ENCODE measurements at regions of chr6 and their contacts with region 1.

Region 1: GRCh38 chr6:30102970-30103874 is 9.7 kb downstream of the TRIM31 start:
- DNase-seq: peak; percentile 60 to 89 (median 81)
- ATAC-seq: peak; percentile 82 to 87
- H3K4me3 Mint-ChIP-seq: peak overlapping the region; percentile 81 to 94 (median 90)
- H3K27ac Mint-ChIP-seq: peak overlapping the region; percentile 29 to 91 (median 78)
- H3K4me1 Mint-ChIP-seq: peaks cover 23 to 44% (median 41%) of the 10 kb centered on the region in 4 donors
- H3K27me3 Mint-ChIP-seq: peaks cover 20 to 59% (median 43%) of the 10 kb centered on the region in 5 donors

Region 2: GRCh38 chr6:30047220-30047619 is 56.0 kb before region 1 on chr6:
- POLR2A ChIA-PET with region 1: no interaction called
- DNase-seq: no peak
- ATAC-seq: peak in 1 of 2 donors; percentile 29
- H3K4me3 Mint-ChIP-seq: no peak overlapping the region
- H3K27ac Mint-ChIP-seq: peak overlapping the region in 2 of 10 donors; percentile 7 to 61
- H3K4me1 Mint-ChIP-seq: peaks cover 5 to 9% (median 7%) of the 10 kb centered on the region in 4 donors
- H3K27me3 Mint-ChIP-seq: no peaks in the 10 kb centered on the region

Region 3: DNA sequence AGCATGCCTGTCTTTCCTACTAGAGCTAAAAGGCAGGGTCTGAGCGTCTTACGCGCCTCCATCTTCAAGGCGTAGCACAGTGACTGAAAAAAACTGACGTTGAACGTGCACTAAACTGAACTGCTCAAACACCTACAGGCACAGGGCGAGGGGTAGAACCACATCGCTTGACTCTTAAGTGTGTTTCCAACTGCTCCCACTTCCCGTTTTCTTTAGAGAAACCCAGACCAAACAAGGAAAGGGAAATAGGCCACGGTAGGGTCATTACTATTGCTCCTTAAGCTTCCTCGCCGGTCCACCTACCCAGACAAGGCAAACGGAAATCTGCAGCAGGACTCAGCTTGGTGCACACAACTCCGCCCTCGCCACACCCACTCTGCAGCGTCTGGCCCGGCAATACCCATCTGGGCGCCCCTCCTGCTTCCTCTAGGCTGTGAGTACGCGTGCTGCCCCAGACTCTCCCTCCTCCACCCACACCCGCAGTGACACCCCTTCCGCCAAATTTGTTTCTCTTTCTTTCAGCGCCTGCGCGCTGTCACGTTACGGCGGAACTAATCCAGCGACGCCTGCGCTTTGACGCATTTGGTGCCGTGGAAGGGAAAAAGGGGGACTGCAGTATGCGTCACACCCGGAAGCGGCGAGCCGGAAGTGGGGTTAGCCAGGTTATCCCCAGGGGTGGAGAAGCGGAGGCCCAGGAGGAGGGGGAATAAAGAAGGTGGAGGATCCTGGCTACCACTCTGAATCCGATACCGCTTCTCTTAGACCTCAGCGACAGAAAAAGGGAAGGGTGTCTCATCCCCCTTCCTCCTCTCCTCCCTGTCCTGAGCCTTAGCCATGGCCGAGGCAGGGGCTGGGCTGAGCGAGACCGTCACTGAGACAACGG is 36.4 kb before region 1 on chr6 and contains the start of gene PPP1R11:
- POLR2A ChIA-PET with region 1: interaction called, 16 read pairs
- DNase-seq: peak; percentile 94 to 99 (median 98)
- ATAC-seq: peak; percentile 95 to 96
- H3K4me3 Mint-ChIP-seq: peak within 1 kb of the TSS; percentile 86 to 99 (median 98)
- H3K27ac Mint-ChIP-seq: peak within 1 kb of the TSS; percentile 97 to 100 (median 99)
- H3K4me1 Mint-ChIP-seq: peaks cover 36 to 75% (median 59%) of the 10 kb centered on the region in 4 donors
- H3K27me3 Mint-ChIP-seq: peaks cover 6 to 22% (median 14%) of the 10 kb centered on the region in 5 donors
- polyA plus RNA-seq, gene PPP1R11: 97.6 to 108 (median 101) TPM

Region 4: DNA sequence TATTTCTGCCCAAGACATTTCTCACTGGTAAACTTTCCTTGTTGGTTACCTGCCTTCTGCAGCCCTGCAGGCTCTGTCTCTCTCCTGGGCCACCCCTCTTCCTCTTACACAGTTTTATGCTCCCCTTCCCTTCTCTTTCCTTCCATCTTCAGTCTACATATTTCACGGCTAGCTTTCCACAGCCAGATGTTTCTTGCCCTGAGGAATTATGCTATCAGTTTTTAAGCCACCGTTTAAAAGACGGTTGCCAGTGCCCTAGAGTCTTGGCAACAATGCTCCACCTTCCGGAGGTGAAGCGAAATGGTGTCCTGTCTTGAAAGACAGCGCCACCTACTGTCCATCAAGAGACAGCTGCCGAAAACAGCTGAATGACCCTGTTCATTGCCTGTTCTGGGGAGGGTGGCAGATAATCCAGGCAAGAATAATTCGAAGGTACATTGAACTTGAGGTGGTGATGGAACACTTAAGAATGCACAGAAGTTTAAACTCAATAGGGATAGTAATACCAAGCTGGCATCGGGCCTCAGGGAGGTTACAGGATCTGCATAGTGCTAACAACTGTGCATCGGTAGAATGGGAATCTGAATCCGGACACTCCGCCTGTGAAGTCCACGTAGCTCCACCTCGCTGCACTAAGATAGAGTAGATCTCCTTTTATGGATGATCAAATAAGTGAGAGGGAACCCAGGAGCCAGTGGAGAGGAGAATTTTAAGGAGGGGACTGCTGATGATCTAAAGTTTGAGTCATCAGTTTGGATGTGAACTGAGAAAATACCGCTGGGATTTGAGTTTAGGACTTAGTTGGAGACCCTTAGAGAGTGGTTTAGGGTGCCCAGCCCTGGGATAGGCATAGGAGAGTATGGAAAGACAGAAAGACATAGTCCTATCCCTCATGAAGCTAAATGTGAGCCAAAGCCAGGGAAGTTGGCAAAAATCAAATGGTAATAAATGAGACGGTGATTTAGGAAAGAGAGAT is 28.0 kb after region 1 on chr6:
- POLR2A ChIA-PET with region 1: interaction called, 18 read pairs
- DNase-seq: peak in 9 of 10 donors; percentile 56 to 86 (median 71)
- ATAC-seq: peak; percentile 95 to 98
- H3K4me3 Mint-ChIP-seq: peak overlapping the region in 5 of 10 donors; percentile 7 to 40 (median 20)
- H3K27ac Mint-ChIP-seq: no peak overlapping the region
- H3K4me1 Mint-ChIP-seq: peaks cover 6 to 14% (median 8%) of the 10 kb centered on the region in 4 donors
- H3K27me3 Mint-ChIP-seq: peaks cover 25 to 73% (median 68%) of the 10 kb centered on the region in 5 donors